Activated CD8-positive, alpha-beta T cell treated with anti-CD3 and anti-CD28 coated beads, Interleukin-2, amount 10 ng/mL, durations not matched to agents 7 days and 5 days (primary cell): ENCODE measurements at regions of chr15 and their contacts with region 1.

Region 1: DNA sequence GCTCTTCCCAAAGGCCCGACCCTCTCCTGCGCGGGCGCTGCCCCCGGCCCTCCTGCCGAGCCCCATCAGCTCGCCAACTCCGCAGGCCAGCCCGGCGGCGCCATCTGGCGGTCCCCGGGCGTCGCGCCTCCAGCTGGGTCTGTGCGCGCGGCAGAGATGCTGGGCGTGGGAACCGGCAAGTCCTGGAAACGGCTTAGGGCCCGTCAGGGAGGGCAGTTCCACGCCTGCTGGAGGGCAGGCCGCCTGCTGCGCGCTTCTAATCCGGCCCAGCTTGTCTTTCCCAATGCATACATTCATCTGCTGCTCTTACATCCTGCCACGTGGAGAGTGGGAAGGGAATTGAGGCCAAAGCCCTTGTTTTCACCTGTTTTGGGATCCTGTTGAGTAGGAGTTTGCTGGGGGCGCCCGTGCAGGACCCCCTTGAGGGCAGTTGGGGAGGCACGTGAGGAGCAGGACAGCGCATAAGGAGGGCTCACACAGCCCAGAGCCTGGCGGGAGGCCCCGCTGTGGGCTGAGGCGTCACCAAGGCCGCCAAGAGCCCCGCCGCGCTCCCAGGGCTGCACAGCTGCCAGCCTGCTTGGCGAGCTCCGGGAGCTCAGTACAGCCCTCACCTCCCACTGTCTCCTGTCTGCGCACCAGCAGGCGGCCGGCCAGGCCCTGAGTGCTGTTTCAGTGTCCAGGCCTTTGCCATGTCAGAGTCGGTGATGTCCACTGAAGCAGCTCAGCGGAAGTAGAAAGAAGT is 165.6 kb downstream of the NSMCE3 start:
- DNase-seq: peak; percentile 67
- ATAC-seq: peak; percentile 83
- H3K4me3 Mint-ChIP-seq: no peak overlapping the region
- H3K27ac Mint-ChIP-seq: no peak overlapping the region
- H3K4me1 Mint-ChIP-seq: peaks cover 10% of the 10 kb centered on the region
- H3K27me3 Mint-ChIP-seq: no peaks in the 10 kb centered on the region

Region 2: GRCh38 chr15:29081781-29082180 is 22.2 kb before region 1 on chr15:
- CTCF ChIA-PET with region 1: interaction called, 15 read pairs
- POLR2A ChIA-PET with region 1: no interaction called
- DNase-seq: no peak
- ATAC-seq: no peak
- H3K4me3 Mint-ChIP-seq: no peak overlapping the region
- H3K27ac Mint-ChIP-seq: no peak overlapping the region
- H3K4me1 Mint-ChIP-seq: peaks cover under 1% of the 10 kb centered on the region
- H3K27me3 Mint-ChIP-seq: no peaks in the 10 kb centered on the region

Region 3: GRCh38 chr15:29424118-29424517 is 320.1 kb after region 1 on chr15:
- CTCF ChIA-PET with region 1: no interaction called
- POLR2A ChIA-PET with region 1: no interaction called
- DNase-seq: no peak
- ATAC-seq: no peak
- H3K4me3 Mint-ChIP-seq: no peak overlapping the region
- H3K27ac Mint-ChIP-seq: no peak overlapping the region
- H3K4me1 Mint-ChIP-seq: no peaks in the 10 kb centered on the region
- H3K27me3 Mint-ChIP-seq: peaks cover 2% of the 10 kb centered on the region